ENCODE measurements at regions of chr5 and their contacts with region 1.

Region 1: GRCh38 chr5:72991394-72991793 is 35.6 kb downstream of the FCHO2 start:
- DNase-seq: no peak
- ATAC-seq: no peak
- H3K4me3 ChIP-seq: no peak overlapping the region
- H3K27ac ChIP-seq: no peak overlapping the region
- H3K4me1 ChIP-seq: no peaks in the 10 kb centered on the region
- H3K27me3 ChIP-seq: no peaks in the 10 kb centered on the region
- CTCF ChIP-seq: no peak

Region 2: GRCh38 chr5:72920690-72921502 is 70.5 kb before region 1 on chr5:
- CTCF ChIA-PET with region 1: no interaction called
- POLR2A ChIA-PET with region 1: no interaction called
- in situ Hi-C with region 1: no loop called
- intact Hi-C with region 1: no loop called
- DNase-seq: peak; percentile 45
- ATAC-seq: peak; percentile 83
- H3K4me3 ChIP-seq: no peak overlapping the region
- H3K27ac ChIP-seq: no peak overlapping the region
- H3K4me1 ChIP-seq: peaks cover 5% of the 10 kb centered on the region; the same call in 1 of the 2 replicates
- H3K27me3 ChIP-seq: no peaks in the 10 kb centered on the region
- CTCF ChIP-seq: peak; percentile 56; the same call in 1 of the 2 replicates

Region 3: DNA sequence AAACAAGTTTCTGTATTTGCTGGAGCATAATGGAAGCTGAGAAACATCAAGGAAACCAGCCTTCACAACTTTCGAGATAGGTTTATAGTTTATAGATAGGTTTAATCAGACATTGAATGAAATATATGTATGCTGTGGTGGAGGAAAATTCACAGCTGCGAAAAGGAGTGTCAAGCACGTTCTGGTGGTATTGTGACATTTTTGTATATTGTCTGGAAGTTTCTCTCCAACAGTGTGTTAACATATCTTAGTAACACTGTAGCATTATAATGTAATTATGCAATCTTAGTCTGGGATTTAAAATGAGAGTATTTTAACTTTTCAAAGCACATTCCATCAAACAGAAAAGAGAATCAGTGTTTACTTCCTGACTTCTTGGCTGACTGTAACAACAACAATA is 14.5 kb after region 1 on chr5:
- CTCF ChIA-PET with region 1: no interaction called
- POLR2A ChIA-PET with region 1: interaction called, 14 read pairs
- in situ Hi-C with region 1: no loop called
- intact Hi-C with region 1: no loop called
- DNase-seq: no peak
- ATAC-seq: no peak
- H3K4me3 ChIP-seq: no peak overlapping the region
- H3K27ac ChIP-seq: no peak overlapping the region
- H3K4me1 ChIP-seq: no peaks in the 10 kb centered on the region
- H3K27me3 ChIP-seq: no peaks in the 10 kb centered on the region
- CTCF ChIP-seq: no peak

Region 4: DNA sequence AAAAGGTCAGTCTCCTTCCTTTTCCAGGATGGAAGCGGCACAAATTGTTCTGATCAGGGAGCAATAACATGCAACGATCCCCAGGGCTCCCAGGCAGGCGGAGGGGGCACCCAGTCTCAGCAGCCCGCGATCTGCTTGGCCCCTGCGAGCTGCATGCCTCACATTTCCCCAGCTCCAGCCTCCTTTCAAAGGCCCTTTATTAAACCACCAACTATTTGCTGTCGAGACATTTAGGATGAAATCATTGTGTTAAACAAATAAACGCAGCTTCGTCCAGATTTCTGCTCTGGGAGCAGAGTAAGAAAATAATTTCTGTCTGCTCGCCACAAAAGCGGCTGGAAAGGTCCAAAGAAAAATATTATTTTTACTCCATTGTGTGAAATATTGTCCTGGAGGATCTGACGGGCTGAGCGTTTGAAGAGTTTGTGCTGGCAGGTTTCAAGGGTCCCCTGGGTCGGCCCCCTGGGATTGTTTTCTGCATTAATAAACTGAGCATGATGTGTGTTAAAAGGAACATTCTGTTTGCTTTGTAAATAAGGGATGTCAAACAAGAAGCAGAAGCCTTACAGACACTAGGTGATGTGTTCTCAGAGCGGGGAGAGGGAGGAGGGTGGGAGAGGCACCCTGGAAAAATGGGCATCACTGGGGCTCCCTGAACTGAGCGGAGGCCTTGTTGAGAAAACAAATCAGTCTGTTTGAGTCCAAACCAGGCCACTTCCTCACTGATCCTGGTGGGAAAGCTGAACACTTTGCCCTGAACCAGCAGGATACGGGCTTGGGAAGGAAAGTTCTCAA is 347.1 kb after region 1 on chr5:
- CTCF ChIA-PET with region 1: no interaction called
- POLR2A ChIA-PET with region 1: no interaction called
- in situ Hi-C with region 1: no loop called
- intact Hi-C with region 1: no loop called
- DNase-seq: no peak
- ATAC-seq: peak; percentile 82
- H3K4me3 ChIP-seq: 0 out of 4 replicates have a peak overlapping the region, but pooled peaks of 1 of the 2 experiments have one; percentile 10
- H3K27ac ChIP-seq: peak overlapping the region; percentile 48
- H3K4me1 ChIP-seq: peaks cover 12% of the 10 kb centered on the region
- H3K27me3 ChIP-seq: no peaks in the 10 kb centered on the region
- CTCF ChIP-seq: no peak